ENCODE measurements at regions of chr5 and their contacts with region 1.

Region 1: GRCh38 chr5:157743163-157744050 is at the start of gene LSM11:
- DNase-seq: peak; percentile 90
- H3K4me3 Mint-ChIP-seq: peak within 1 kb of the TSS; percentile 78
- H3K27ac Mint-ChIP-seq: peak within 1 kb of the TSS; percentile 68
- H3K4me1 Mint-ChIP-seq: peaks cover 18% of the 10 kb centered on the region
- H3K27me3 Mint-ChIP-seq: no peaks in the 10 kb centered on the region
- CTCF ChIP-seq: peak; percentile 100
- total RNA-seq, gene LSM11: 3.4 and 4.5 TPM in 2 replicates

Region 2: DNA sequence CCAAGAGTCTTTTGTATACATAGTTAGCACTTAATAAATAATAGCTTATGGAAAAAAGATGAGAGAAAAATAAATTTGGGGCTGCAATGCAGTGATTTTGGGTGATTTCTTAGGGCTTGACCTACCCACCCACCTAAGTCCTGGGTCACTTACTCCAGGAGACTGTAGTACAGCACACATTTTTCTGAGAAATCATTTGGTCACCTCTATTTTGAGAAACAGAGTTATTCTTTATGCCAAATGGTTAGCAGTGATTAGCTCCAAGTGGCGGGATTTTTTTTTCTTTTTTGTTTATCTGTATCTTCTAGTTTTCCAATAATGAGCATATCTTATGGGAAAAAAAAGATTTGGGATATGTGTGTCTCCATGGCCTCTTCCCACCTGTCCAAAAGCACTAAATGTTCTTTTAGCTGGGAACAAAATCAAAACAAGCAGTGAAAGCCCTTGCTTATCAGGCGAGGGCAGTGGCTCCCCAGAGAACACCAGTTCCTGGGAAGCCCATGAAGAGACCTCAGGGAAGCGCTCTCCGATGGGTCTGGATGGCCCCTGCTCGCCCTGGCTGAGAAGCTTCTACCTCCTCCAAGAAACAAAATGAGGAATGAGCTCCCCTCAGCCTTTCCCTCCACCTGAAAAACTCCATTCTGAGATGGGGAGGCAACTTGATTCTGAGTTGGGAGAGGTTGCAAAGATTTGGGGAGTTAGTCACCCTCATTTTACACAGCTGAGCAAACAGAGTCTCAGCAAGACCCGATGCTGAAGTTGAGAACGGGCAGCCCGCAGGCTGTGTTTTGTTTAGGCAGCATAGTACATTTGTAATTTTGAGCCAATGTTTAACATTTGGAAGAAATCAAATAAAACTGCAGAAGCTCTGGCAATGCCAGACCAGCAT is 407.6 kb before region 1 on chr5:
- CTCF ChIA-PET with region 1: interaction called, 92 read pairs
- POLR2A ChIA-PET with region 1: no interaction called
- intact Hi-C with region 1: no loop called
- DNase-seq: no peak
- H3K4me3 Mint-ChIP-seq: no peak overlapping the region
- H3K27ac Mint-ChIP-seq: no peak overlapping the region
- H3K4me1 Mint-ChIP-seq: no peaks in the 10 kb centered on the region
- H3K27me3 Mint-ChIP-seq: no peaks in the 10 kb centered on the region
- CTCF ChIP-seq: no peak

Region 3: DNA sequence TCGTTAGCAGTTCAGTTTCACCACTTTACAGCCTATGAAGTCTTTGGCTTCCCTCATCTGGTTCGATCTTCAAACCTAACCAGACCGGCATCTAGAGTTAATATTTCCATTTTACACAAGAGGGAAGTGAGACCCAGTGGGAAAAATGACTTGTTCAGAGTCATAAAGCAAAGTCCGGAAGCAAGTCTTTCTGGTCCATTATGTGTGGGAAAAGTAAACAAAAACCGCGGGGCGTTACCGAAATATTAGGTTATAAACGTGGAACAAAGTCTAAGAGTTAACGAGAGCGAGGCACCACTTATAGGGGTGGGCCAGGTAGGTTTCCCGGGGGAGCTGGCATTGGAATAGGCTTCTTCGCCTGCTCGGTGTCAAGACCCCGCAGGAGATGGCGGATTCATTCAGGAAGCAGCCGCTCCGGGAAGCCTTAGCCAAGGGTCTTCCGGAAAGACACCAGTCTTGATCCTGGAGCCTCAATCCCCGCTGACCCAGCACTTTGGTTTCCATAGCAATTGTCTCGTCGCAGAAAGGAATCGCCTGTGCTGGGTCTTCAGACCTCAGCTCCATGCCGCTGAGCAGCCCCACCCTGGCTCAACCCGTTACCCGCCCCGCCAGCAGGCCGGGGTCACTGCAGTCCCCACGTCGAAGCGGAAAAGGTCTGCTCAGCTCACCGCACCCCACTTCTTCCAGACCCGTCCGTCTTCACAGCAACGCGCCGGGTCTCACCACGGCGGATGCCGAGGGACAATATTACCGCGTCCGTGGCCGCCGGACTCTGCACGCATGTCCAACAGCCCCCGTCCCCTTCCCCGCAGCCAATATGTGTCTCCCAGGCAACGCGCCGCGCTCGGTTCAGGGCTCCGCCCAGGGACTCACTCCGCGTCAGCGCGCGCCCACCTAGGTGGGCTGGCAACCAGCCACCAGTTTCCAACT is 72.5 kb before region 1 on chr5 and contains the start of gene C5orf52:
- CTCF ChIA-PET with region 1: interaction called, 8 read pairs
- POLR2A ChIA-PET with region 1: no interaction called
- intact Hi-C with region 1: loop called (anchors 1 kb)
- DNase-seq: no peak
- H3K4me3 Mint-ChIP-seq: peak within 1 kb of the TSS; percentile 59
- H3K27ac Mint-ChIP-seq: peak within 1 kb of the TSS; percentile 49
- H3K4me1 Mint-ChIP-seq: peaks cover 10% of the 10 kb centered on the region
- H3K27me3 Mint-ChIP-seq: peaks cover 29% of the 10 kb centered on the region
- CTCF ChIP-seq: no peak
- total RNA-seq, gene C5orf52: not detected in 2 replicates

Region 4: GRCh38 chr5:157731272-157732129 is 11.9 kb before region 1 on chr5 and contains the start of gene THG1L:
- CTCF ChIA-PET with region 1: interaction called, 94 read pairs
- POLR2A ChIA-PET with region 1: interaction called, 17 read pairs
- intact Hi-C with region 1: no loop called
- DNase-seq: peak; percentile 100
- H3K4me3 Mint-ChIP-seq: peak within 1 kb of the TSS; percentile 97
- H3K27ac Mint-ChIP-seq: peak within 1 kb of the TSS; percentile 98
- H3K4me1 Mint-ChIP-seq: peaks cover 14% of the 10 kb centered on the region
- H3K27me3 Mint-ChIP-seq: no peaks in the 10 kb centered on the region
- CTCF ChIP-seq: no peak
- total RNA-seq, gene THG1L: 21.1 and 29.9 TPM in 2 replicates

Region 5: DNA sequence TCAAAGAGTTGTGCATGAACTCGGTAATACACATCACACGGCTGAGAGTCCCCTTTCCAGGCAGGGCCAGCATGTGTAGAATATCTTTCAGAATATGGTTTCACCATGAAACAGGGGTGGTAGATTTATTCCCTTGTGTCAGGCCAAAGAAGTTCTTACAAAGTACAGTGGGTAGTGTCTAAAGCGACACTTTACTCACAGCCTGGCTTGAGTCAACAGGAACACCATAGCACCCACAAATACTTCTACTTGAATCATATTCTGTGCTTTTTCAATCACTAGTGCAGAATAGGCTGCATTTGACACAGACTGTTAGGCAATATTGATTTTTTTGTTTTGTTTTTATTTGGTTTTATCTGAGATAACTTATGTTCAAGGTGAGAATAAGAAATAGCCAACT is 12.7 kb after region 1 on chr5:
- CTCF ChIA-PET with region 1: interaction called, 177 read pairs
- POLR2A ChIA-PET with region 1: interaction called, 4 read pairs
- intact Hi-C with region 1: no loop called
- DNase-seq: no peak
- H3K4me3 Mint-ChIP-seq: no peak overlapping the region
- H3K27ac Mint-ChIP-seq: no peak overlapping the region
- H3K4me1 Mint-ChIP-seq: no peaks in the 10 kb centered on the region
- H3K27me3 Mint-ChIP-seq: no peaks in the 10 kb centered on the region
- CTCF ChIP-seq: no peak

Region 6: GRCh38 chr5:158100373-158100888 is 357.0 kb after region 1 on chr5:
- CTCF ChIA-PET with region 1: no interaction called
- POLR2A ChIA-PET with region 1: no interaction called
- intact Hi-C with region 1: no loop called
- DNase-seq: peak; percentile 55
- H3K4me3 Mint-ChIP-seq: no peak overlapping the region
- H3K27ac Mint-ChIP-seq: no peak overlapping the region
- H3K4me1 Mint-ChIP-seq: peaks cover 6% of the 10 kb centered on the region
- H3K27me3 Mint-ChIP-seq: no peaks in the 10 kb centered on the region
- CTCF ChIP-seq: no peak